Naive thymus-derived CD4-positive, alpha-beta T cell (primary cell): ENCODE measurements at regions of chrX and their contacts with region 1.

Region 1: GRCh38 chrX:56248492-56248891 is 16.3 kb downstream of the KLF8 start:
- DNase-seq: peak; percentile 11 to 64 (median 47)
- ATAC-seq: peak; percentile 77
- H3K4me3 ChIP-seq: no peak overlapping the region
- H3K4me3 Mint-ChIP-seq: no peak overlapping the region
- H3K27ac ChIP-seq: no peak overlapping the region
- H3K27ac Mint-ChIP-seq: peak overlapping the region in 1 of 9 donors; percentile 48
- H3K4me1 ChIP-seq: no peaks in the 10 kb centered on the region
- H3K4me1 Mint-ChIP-seq: peaks cover 0 to 19% (median 0%) of the 10 kb centered on the region in 7 donors
- H3K27me3 ChIP-seq: no peaks in the 10 kb centered on the region
- H3K27me3 Mint-ChIP-seq: no peaks in the 10 kb centered on the region

Region 2: DNA sequence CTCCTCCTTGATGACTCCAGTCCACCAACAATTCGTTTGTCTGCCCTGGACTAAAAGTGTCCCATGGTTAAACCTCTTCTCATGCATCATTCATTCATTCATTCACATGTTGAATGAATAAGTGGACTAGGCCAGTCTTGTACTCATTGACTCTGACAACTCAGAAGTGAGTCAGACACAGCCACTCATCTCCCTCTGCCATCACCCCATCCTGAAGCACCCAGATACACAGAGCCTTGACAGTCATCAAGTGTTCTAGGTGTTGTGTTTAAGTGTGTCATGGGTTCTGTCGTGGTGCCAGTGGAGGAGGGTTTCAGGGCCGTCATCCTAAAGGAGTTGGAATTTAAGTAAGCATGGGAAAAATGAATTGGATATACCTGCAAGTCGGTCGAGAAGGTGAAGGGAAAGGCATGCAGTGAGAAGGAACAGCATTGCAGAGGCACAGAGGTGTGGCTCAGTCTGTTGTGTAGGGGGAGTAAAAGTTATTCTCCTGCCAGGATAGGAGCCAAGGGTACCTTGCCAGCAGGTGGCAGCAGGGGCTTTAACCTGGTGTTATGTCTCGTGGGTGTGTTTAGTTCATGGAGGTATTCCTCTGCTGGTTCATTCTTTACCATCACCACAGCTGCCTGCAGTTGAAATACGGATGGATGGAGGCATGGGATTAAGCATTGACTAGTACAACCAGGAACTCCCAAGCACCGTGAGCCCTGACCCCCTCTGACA is 1422.6 kb before region 1 on chrX:
- CTCF ChIA-PET with region 1: no interaction called
- POLR2A ChIA-PET with region 1: no interaction called
- intact Hi-C with region 1: loop called in 1 of 2 experiments (anchors 10 kb)
- DNase-seq: peak in 5 of 9 donors; percentile 21 to 42 (median 27)
- ATAC-seq: peak; percentile 51
- H3K4me3 ChIP-seq: no peak overlapping the region
- H3K4me3 Mint-ChIP-seq: no peak overlapping the region
- H3K27ac ChIP-seq: no peak overlapping the region
- H3K27ac Mint-ChIP-seq: peak overlapping the region in 3 of 9 donors; percentile 1 to 31 (median 30)
- H3K4me1 ChIP-seq: no peaks in the 10 kb centered on the region
- H3K4me1 Mint-ChIP-seq: peaks cover 0 to 4% (median 0%) of the 10 kb centered on the region in 7 donors
- H3K27me3 ChIP-seq: no peaks in the 10 kb centered on the region
- H3K27me3 Mint-ChIP-seq: no peaks in the 10 kb centered on the region

Region 3: DNA sequence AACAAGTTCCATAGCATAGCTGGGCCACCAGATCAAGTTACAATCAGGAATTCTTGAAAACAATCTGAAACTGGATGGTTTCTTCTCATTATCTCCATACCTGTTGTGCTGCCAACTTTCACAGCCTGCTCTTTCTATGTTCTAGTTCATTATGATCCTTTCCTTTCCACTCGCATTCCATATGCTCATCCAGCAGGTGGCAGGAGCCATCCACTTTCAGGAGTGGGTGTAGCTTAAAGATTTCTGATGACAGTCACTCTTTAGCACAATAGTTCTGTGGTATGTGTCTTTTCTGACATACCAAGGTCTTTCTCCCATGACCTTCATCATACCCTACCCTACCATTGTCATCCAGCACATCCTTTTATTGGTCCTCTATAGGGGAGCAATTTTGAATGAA is 1113.3 kb before region 1 on chrX:
- CTCF ChIA-PET with region 1: interaction called, 18 read pairs
- POLR2A ChIA-PET with region 1: no interaction called
- intact Hi-C with region 1: loop called in 1 of 2 experiments (anchors 2 kb)
- DNase-seq: peak in 7 of 9 donors; percentile 3 to 45 (median 17)
- ATAC-seq: no peak
- H3K4me3 ChIP-seq: no peak overlapping the region
- H3K4me3 Mint-ChIP-seq: no peak overlapping the region
- H3K27ac ChIP-seq: no peak overlapping the region
- H3K27ac Mint-ChIP-seq: no peak overlapping the region
- H3K4me1 ChIP-seq: no peaks in the 10 kb centered on the region
- H3K4me1 Mint-ChIP-seq: peaks cover 0 to 5% (median 0%) of the 10 kb centered on the region in 7 donors
- H3K27me3 ChIP-seq: no peaks in the 10 kb centered on the region
- H3K27me3 Mint-ChIP-seq: no peaks in the 10 kb centered on the region

Region 4: GRCh38 chrX:55907968-55908607 is 340.4 kb before region 1 on chrX:
- CTCF ChIA-PET with region 1: no interaction called
- POLR2A ChIA-PET with region 1: no interaction called
- intact Hi-C with region 1: loop called in 1 of 2 experiments (anchors 10 kb)
- DNase-seq: peak; percentile 7 to 50 (median 44)
- ATAC-seq: peak; percentile 80
- H3K4me3 ChIP-seq: peak overlapping the region; percentile 83
- H3K4me3 Mint-ChIP-seq: peak overlapping the region; percentile 80 to 97 (median 94)
- H3K27ac ChIP-seq: peak overlapping the region; percentile 61
- H3K27ac Mint-ChIP-seq: peak overlapping the region; percentile 53 to 93 (median 85)
- H3K4me1 ChIP-seq: no peaks in the 10 kb centered on the region
- H3K4me1 Mint-ChIP-seq: peaks cover 6 to 32% (median 16%) of the 10 kb centered on the region in 7 donors
- H3K27me3 ChIP-seq: no peaks in the 10 kb centered on the region
- H3K27me3 Mint-ChIP-seq: no peaks in the 10 kb centered on the region

Region 5: DNA sequence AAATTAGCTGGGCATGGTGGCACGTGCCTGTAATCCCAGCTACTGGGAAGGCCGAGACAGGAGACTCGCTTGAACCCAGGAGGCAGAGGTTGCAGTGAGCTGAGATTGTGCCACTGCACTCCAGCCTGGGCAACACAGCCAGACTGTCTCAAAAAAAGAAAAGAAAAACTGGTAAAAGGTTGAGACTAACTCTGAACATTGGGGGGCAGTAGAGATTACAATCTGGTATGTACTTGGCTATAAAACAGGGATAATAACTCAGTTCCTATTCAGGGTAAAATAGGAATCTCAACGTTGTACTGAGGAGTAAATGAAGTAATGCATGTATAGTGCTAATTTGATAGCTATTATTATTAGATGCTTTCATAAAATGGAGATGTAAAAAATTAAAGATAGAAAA is 28.8 kb before region 1 on chrX:
- CTCF ChIA-PET with region 1: no interaction called
- POLR2A ChIA-PET with region 1: no interaction called
- intact Hi-C with region 1: loop called in 1 of 2 experiments (anchors 1 kb)
- DNase-seq: no peak
- ATAC-seq: no peak
- H3K4me3 ChIP-seq: no peak overlapping the region
- H3K4me3 Mint-ChIP-seq: no peak overlapping the region
- H3K27ac ChIP-seq: no peak overlapping the region
- H3K27ac Mint-ChIP-seq: no peak overlapping the region
- H3K4me1 ChIP-seq: no peaks in the 10 kb centered on the region
- H3K4me1 Mint-ChIP-seq: no peaks in the 10 kb centered on the region
- H3K27me3 ChIP-seq: no peaks in the 10 kb centered on the region
- H3K27me3 Mint-ChIP-seq: peaks cover 0 to 4% (median 0%) of the 10 kb centered on the region in 5 donors